ENCODE measurements at regions of chr7 and their contacts with region 1.

Region 1: DNA sequence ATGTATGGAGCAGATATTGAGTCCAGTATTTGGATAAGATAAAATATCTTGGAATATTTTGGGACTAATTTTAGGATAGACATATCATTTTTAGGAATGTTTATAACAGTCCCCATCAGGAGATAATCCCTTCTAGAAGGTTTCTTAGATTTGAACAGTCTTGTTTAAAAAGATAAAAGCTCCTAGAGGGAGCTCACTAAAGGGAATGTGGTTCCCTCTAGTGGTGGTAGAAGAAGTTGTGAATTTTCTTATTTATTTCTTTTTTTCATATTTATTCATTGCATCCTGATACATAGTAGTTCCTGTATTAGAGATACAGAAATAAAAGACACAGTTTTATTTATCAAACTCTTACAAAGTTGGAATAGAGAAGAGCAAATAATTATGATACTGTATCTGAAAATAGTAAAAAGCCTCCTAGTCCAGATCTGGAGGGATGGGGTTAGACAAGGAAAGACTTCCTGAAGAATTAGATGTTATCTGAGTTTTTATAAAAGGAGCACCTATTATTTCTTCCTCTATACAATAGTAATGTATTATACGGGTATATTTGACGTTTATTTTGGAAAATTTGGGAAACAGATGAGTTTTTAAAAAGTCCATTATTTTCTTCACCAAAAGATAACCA is 24.5 kb upstream of the KLF14 start:
- DNase-seq: peak; percentile 60
- H3K4me3 ChIP-seq: no peak overlapping the region
- H3K27ac ChIP-seq: no peak overlapping the region
- H3K4me1 ChIP-seq: no peaks in the 10 kb centered on the region
- CTCF ChIP-seq: peak; percentile 96

Region 2: GRCh38 chr7:130242198-130243014 is 516.1 kb before region 1 on chr7:
- CTCF ChIA-PET with region 1: no interaction called
- POLR2A ChIA-PET with region 1: no interaction called
- intact Hi-C with region 1: loop called (anchors 2 kb)
- DNase-seq: peak; percentile 33
- H3K4me3 ChIP-seq: no peak overlapping the region
- H3K27ac ChIP-seq: no peak overlapping the region
- H3K4me1 ChIP-seq: no peaks in the 10 kb centered on the region
- CTCF ChIP-seq: peak; percentile 94

Region 3: DNA sequence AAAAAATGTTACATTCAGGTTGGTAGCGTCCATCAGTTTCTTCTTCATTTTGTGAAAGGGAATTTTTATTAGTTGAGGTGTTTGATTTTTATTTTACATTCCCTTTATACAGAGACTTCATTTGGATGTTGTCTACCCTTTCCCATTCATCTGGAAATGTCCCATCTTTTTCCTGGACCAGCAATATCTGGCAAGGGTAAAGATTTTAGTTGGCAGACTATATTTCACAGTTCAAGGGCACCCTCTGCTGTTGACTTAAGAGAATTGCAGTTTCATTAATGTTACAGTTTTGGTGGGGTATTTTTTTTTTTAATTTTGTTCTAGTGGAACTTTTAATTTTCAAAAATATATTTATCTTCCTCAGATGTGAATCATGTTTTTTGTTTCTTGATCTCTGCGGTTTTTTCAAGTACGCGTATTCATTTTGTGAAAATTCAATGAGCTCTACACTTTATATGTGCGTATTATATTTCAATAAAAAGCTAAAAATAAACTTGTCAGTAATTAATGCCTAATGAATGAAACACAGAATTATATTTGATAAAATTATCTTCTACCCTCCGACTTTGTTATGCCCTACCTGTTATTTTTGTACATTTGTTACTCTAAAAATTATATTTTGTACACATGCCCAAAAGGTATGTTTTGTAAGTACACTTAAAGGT is 73.4 kb after region 1 on chr7:
- CTCF ChIA-PET with region 1: no interaction called
- POLR2A ChIA-PET with region 1: no interaction called
- intact Hi-C with region 1: loop called (anchors 5 kb)
- DNase-seq: peak; percentile 54
- H3K4me3 ChIP-seq: no peak overlapping the region
- H3K27ac ChIP-seq: no peak overlapping the region
- H3K4me1 ChIP-seq: no peaks in the 10 kb centered on the region
- CTCF ChIP-seq: peak; percentile 97